OCI-LY7 (cell line): ENCODE measurements at regions of chr6 and their contacts with region 1.

Region 1: GRCh38 chr6:72636215-72636614 is 14.4 kb downstream of the KCNQ5 start:
- DNase-seq: no peak
- H3K4me3 ChIP-seq: no peak overlapping the region
- H3K27ac ChIP-seq: no peak overlapping the region
- H3K4me1 ChIP-seq: peaks cover 9% of the 10 kb centered on the region
- CTCF ChIP-seq: no peak

Region 2: GRCh38 chr6:72649032-72649984 is 13.1 kb after region 1 on chr6:
- CTCF ChIA-PET with region 1: no interaction called
- POLR2A ChIA-PET with region 1: interaction called, 10 read pairs
- intact Hi-C with region 1: no loop called
- DNase-seq: no peak
- H3K4me3 ChIP-seq: no peak overlapping the region
- H3K27ac ChIP-seq: no peak overlapping the region
- H3K4me1 ChIP-seq: peaks cover 37% of the 10 kb centered on the region
- CTCF ChIP-seq: no peak

Region 3: GRCh38 chr6:73207221-73207837 is 571.1 kb after region 1 on chr6:
- CTCF ChIA-PET with region 1: no interaction called
- POLR2A ChIA-PET with region 1: no interaction called
- intact Hi-C with region 1: no loop called
- DNase-seq: no peak
- H3K4me3 ChIP-seq: no peak overlapping the region
- H3K27ac ChIP-seq: no peak overlapping the region
- H3K4me1 ChIP-seq: no peaks in the 10 kb centered on the region
- CTCF ChIP-seq: no peak